ENCODE measurements at regions of chr1 and their contacts with region 1.

Region 1: DNA sequence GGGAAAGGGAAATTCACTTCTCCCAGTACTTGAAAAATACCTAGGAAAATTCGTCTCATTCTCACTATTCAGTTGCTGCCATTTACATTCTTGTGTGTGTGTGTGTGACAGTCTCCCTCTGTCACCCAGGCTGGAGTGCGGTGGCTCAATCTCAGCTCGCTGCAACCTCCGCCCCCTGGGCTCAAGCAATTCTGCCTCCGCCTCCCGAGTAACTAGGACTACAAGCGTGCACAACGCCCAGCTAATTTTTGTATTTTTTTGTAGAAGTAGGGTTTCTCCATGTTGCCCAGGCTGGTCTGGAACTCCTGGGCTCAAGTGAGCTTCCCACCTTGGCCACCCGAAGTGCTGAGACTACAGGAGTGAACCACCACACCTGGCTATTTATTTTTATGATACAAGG is 1.2 kb downstream of the SNAPIN start:
- DNase-seq: no peak
- H3K4me3 ChIP-seq: peak overlapping the region; percentile 67
- H3K27ac ChIP-seq: peak overlapping the region; percentile 79
- H3K4me1 ChIP-seq: peaks cover 13% of the 10 kb centered on the region
- H3K27me3 ChIP-seq: no peaks in the 10 kb centered on the region
- CTCF ChIP-seq: no peak

Region 2: DNA sequence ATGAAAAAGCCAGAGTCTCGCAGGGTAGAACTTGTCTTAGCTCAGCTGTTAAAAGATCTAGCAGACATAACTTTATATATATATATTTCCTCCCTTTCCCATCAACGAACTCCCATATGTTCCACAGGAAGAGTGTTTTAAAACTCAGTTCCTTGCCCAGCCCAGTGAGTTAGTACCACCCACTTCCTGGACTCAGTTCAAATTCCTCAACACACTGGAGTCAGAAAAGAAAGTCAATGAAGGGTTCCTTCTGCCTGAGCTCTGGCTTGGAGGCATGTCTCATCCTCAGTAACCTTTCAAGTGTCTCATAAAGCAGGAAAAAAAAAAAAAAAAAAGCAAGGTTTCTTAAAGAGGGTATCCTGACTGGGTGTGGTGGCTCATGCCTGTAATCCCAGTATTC is 516.7 kb after region 1 on chr1:
- CTCF ChIA-PET with region 1: no interaction called
- POLR2A ChIA-PET with region 1: interaction called, 10 read pairs
- intact Hi-C with region 1: no loop called
- DNase-seq: peak; percentile 61
- H3K4me3 ChIP-seq: no peak overlapping the region
- H3K27ac ChIP-seq: no peak overlapping the region
- H3K4me1 ChIP-seq: peaks cover 48% of the 10 kb centered on the region
- H3K27me3 ChIP-seq: no peaks in the 10 kb centered on the region
- CTCF ChIP-seq: no peak

Measured in A673 (cell line).